Thyroid gland (tissue), 4 donors: ENCODE measurements at regions of chr11 and their contacts with region 1.

Region 1: GRCh38 chr11:69686452-69686851 is 11.3 kb upstream of the LTO1 start:
- DNase-seq: no peak
- H3K4me3 ChIP-seq: no peak overlapping the region
- H3K27ac ChIP-seq: no peak overlapping the region
- H3K4me1 ChIP-seq: peaks cover 0 to 3% of the 10 kb centered on the region in 2 donors
- H3K27me3 ChIP-seq: no peaks in the 10 kb centered on the region
- CTCF ChIP-seq: no peak
- POLR2A ChIP-seq: no peak

Region 2: DNA sequence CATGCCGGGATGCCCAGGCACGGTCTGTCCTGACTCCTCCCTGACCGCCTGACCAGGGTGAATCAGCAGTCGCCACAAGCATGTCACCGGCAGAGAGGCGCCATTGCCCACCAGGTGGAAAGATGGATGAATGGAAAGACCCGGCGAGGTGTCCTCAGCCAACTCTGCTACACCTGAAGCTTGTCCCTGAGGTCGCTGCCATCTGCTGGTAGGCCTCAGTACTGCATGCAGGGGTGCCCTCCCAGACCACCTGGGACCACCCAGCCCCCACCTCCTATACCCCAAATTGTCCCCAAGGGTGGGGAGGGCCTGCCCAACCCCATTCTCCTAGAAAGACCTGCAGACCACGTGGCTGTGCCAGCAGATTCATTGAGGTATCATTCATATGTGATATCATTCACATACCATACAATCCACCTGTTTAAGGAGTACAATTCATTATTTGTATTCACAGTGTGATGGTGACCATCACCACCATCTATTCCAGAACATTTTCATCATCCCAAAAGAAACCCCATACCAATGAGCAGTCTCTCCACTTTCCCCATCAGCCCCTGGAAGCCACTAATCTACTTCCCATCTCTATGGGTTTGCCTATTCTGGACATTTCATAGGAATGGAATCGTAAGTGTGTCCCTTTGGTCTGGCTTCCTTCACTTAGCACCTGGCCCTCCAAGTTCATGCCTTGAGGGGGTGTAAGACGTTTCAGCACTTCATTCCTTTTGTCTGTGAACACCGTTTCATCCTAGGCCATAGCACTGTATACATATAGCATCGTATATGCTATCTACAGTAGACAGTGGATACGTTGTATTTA is 115.3 kb after region 1 on chr11:
- intact Hi-C with region 1: loop called (anchors 5 kb)
- DNase-seq: peak; percentile 25 to 42
- H3K4me3 ChIP-seq: no peak overlapping the region
- H3K27ac ChIP-seq: no peak overlapping the region
- H3K4me1 ChIP-seq: no peaks in the 10 kb centered on the region
- H3K27me3 ChIP-seq: no peaks in the 10 kb centered on the region
- CTCF ChIP-seq: peak; percentile 49 to 72 (median 64)
- POLR2A ChIP-seq: no peak

Region 3: DNA sequence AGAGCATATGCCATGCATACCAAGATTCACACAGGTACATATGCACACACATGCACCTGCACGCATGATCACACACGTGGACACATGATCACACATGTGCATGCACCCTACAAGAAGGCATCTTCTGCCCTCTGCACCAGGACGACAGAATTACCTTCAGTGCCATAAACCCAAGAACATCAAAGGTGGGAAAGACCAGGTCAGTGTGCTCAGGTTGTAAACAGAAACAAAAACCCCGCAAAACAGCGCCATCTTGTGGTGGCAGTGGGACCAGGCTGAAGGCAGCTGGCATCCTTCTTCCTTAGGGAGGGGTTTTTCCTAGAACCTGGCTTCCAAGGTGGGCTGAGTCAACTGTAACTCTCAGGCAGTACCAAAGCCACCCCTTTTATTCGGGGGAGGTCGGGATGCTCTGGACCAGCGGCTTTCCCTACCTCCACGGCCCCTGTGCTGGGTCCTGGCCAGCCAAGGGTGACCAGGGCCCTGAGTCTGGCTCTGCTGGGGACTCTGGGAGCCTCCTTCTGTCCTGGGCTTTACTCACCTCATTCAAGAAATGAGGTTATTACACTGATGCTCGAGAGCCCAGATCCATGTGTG is 202.1 kb after region 1 on chr11:
- intact Hi-C with region 1: loop called (anchors 2 kb)
- DNase-seq: peak; percentile 59 to 66
- H3K4me3 ChIP-seq: no peak overlapping the region
- H3K27ac ChIP-seq: no peak overlapping the region
- H3K4me1 ChIP-seq: peaks cover 0 to 4% of the 10 kb centered on the region in 2 donors
- H3K27me3 ChIP-seq: no peaks in the 10 kb centered on the region
- CTCF ChIP-seq: peak; percentile 54 to 86 (median 66)
- POLR2A ChIP-seq: no peak

Region 4: GRCh38 chr11:70191495-70192140 is 505.2 kb after region 1 on chr11:
- intact Hi-C with region 1: loop called (anchors 5 kb)
- DNase-seq: peak; percentile 80 to 82
- H3K4me3 ChIP-seq: no peak overlapping the region
- H3K27ac ChIP-seq: no peak overlapping the region
- H3K4me1 ChIP-seq: no peaks in the 10 kb centered on the region
- H3K27me3 ChIP-seq: no peaks in the 10 kb centered on the region
- CTCF ChIP-seq: peak; percentile 84 to 97 (median 90)
- POLR2A ChIP-seq: no peak